Heart left ventricle (tissue), 16 donors: ENCODE measurements at regions of chr2 and their contacts with region 1.

Region 1: DNA sequence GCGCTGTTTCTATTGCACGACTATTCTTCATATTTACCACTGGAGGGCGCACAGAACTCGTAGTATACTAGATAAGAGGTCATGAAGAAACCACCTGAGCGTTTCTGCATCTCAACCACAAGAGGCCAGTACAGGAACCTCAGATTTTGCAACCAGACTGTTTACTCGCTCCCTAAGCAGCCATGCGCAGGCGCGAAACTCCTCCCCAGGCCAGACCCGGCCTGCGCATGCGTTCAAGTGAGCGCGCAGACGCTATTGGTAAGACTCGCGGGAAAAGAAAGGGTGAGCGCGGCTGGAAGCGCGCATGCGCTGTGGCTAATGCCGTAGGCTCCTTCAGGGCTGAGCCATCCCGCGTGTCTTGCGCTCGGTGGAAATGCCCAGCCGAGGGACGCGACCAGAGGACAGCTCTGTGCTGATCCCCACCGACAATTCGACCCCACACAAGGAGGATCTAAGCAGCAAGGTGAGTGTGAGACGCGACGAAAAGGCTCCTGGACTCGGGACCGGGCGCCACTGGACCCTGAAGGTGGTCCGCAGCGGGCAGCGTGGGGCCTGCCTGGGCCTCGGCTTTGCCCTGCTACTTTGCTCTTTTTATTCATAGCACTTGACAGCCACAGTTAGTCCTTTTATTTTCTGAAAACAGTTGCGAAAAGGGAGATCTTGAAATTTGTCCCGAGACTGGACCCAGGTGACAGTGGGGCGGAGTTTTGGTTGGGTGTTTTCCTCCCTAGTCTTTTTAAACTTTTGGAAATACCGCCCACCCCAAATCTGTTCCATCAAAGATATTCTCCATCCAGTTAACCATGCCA is at the start of gene ASNSD1:
- DNase-seq: peak; percentile 98 to 100 (median 99)
- ATAC-seq: peak; percentile 97 to 98 (median 98)
- H3K4me3 ChIP-seq: peak within 1 kb of the TSS; percentile 59 to 100 (median 81)
- H3K27ac ChIP-seq: peak within 1 kb of the TSS in 11 of 12 donors; percentile 63 to 91 (median 82)
- H3K4me1 ChIP-seq: peaks cover 0 to 55% (median 22%) of the 10 kb centered on the region in 12 donors
- H3K27me3 ChIP-seq: no peaks in the 10 kb centered on the region
- CTCF ChIP-seq: peak in 11 of 12 donors; percentile 88 to 99 (median 97)
- POLR2A ChIP-seq: peak; percentile 23 to 88
- total RNA-seq, gene ASNSD1: 26.3 to 43.5 (median 32.4) TPM

Region 2: GRCh38 chr2:189674374-189675112 is 13.2 kb after region 1 on chr2 and contains the start of gene ANKAR:
- intact Hi-C with region 1: loop called in 3 of 10 experiments (anchors 1 kb)
- DNase-seq: peak; percentile 90 to 96 (median 93)
- ATAC-seq: peak; percentile 95 to 99 (median 98)
- H3K4me3 ChIP-seq: peak within 1 kb of the TSS; percentile 39 to 81 (median 70)
- H3K27ac ChIP-seq: peak within 1 kb of the TSS; percentile 88 to 100 (median 96)
- H3K4me1 ChIP-seq: peaks cover 0 to 27% (median 15%) of the 10 kb centered on the region in 12 donors
- H3K27me3 ChIP-seq: no peaks in the 10 kb centered on the region
- CTCF ChIP-seq: peak; percentile 67 to 98 (median 92)
- POLR2A ChIP-seq: no peak
- total RNA-seq, gene ANKAR: 1.8 to 10.1 (median 6.4) TPM

Region 3: GRCh38 chr2:189698020-189698887 is 36.9 kb after region 1 on chr2:
- intact Hi-C with region 1: loop called (anchors 1 to 5 kb)
- DNase-seq: peak in 1 of 5 donors; percentile 28
- ATAC-seq: peak in 3 of 4 donors; percentile 56 to 76 (median 68)
- H3K4me3 ChIP-seq: peak overlapping the region in 3 of 12 donors; percentile 10 to 14 (median 11)
- H3K27ac ChIP-seq: no peak overlapping the region
- H3K4me1 ChIP-seq: peaks cover 0 to 3% (median 0%) of the 10 kb centered on the region in 12 donors
- H3K27me3 ChIP-seq: no peaks in the 10 kb centered on the region
- CTCF ChIP-seq: peak; percentile 62 to 81 (median 70)
- POLR2A ChIP-seq: no peak

Region 4: DNA sequence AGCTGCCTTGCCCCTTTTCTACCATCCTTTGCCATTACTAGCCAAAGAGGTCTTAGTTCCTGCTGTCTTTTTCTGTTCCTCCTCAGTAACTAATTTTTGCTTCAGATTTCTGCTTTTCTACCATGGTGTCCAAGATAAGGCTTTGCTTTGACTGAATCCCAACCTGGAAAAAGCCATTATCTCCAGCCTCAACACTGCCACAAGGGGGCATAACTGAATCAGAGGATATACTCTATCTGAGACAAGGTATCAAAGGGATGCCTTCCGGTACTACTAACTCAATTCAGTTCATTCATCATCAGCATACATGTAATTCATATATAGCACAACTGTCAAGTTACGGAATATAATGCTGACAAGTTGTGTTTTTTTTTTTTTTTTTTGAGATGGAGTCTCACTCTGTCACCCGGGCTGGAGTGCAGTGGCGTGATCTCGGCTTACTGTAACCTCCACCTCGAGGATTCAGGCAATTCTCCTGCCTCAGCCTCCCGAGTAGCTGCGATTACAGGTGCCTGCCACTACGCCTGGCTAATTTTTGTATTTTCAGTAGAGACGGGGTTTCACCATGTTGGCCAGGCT is 89.8 kb after region 1 on chr2:
- intact Hi-C with region 1: loop called in 1 of 10 experiments (anchors 10 kb)
- DNase-seq: no peak
- ATAC-seq: peak in 1 of 4 donors; percentile 41
- H3K4me3 ChIP-seq: no peak overlapping the region
- H3K27ac ChIP-seq: no peak overlapping the region
- H3K4me1 ChIP-seq: peaks cover 0 to 5% (median 0%) of the 10 kb centered on the region in 12 donors
- H3K27me3 ChIP-seq: no peaks in the 10 kb centered on the region
- CTCF ChIP-seq: peak; percentile 26 to 60 (median 44)
- POLR2A ChIP-seq: no peak

Region 5: GRCh38 chr2:189762551-189763298 is 101.4 kb after region 1 on chr2 and contains the start of gene OSGEPL1:
- intact Hi-C with region 1: loop called in 5 of 10 experiments (anchors 1 to 10 kb)
- DNase-seq: peak; percentile 93 to 96 (median 95)
- ATAC-seq: peak; percentile 96 to 98 (median 98)
- H3K4me3 ChIP-seq: peak within 1 kb of the TSS; percentile 69 to 90 (median 78)
- H3K27ac ChIP-seq: peak within 1 kb of the TSS; percentile 20 to 97 (median 86)
- H3K4me1 ChIP-seq: peaks cover 0 to 19% (median 12%) of the 10 kb centered on the region in 12 donors
- H3K27me3 ChIP-seq: no peaks in the 10 kb centered on the region
- CTCF ChIP-seq: peak in 10 of 12 donors; percentile 28 to 73 (median 57)
- POLR2A ChIP-seq: peak in 1 of 2 donors; percentile 38
- total RNA-seq, gene OSGEPL1: 6.8 to 11.0 (median 8.6) TPM

Region 6: GRCh38 chr2:189783927-189784867 is 122.8 kb after region 1 on chr2 and contains the starts of genes ORMDL1 and PMS1:
- intact Hi-C with region 1: loop called in 1 of 10 experiments (anchors 5 kb)
- DNase-seq: peak; percentile 95 to 98 (median 97)
- ATAC-seq: peak; percentile 97 to 99 (median 98)
- H3K4me3 ChIP-seq: peak within 1 kb of the TSS; percentile 65 to 92 (median 80)
- H3K27ac ChIP-seq: peak within 1 kb of the TSS; percentile 90 to 98 (median 96)
- H3K4me1 ChIP-seq: peaks cover 3 to 45% (median 28%) of the 10 kb centered on the region in 12 donors
- H3K27me3 ChIP-seq: no peaks in the 10 kb centered on the region
- CTCF ChIP-seq: peak in 1 of 12 donors; percentile 8
- POLR2A ChIP-seq: peak in 1 of 2 donors; percentile 92
- total RNA-seq, gene ORMDL1: 14.3 to 32.9 (median 26.2) TPM
- total RNA-seq, gene PMS1: 6.4 to 16.7 (median 10.7) TPM